Heart right ventricle (tissue), 16 donors: ENCODE measurements at regions of chr12 and their contacts with region 1.

Region 1: DNA sequence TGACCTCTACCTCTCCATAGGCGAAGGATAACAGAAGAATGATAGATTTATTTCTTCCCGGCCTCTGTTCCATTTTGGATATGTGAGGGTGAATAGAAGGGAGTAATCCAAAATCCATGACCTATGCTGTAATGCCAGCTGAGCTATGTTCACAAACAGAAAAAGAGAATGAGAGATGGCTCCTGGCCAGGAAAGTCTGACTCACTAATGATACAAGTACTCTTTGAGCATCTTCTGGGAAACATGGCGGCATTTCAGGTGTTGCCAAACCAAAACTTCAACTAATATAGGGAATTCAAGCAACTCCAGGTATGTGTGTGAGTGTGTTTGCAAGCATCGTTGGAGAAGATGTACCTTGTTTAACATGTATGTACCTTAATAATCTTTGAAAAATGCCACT is 55.1 kb downstream of the MED13L start:
- DNase-seq: peak in 1 of 2 donors; percentile 89
- ATAC-seq: peak; percentile 74 to 92 (median 84)
- H3K4me3 ChIP-seq: no peak overlapping the region
- H3K27ac ChIP-seq: peak overlapping the region in 7 of 10 donors; percentile 23 to 75 (median 39)
- H3K4me1 ChIP-seq: peaks cover 0 to 52% (median 31%) of the 10 kb centered on the region in 9 donors
- H3K27me3 ChIP-seq: no peaks in the 10 kb centered on the region
- CTCF ChIP-seq: no peak

Region 2: GRCh38 chr12:116135209-116135930 is 87.0 kb before region 1 on chr12:
- intact Hi-C with region 1: loop called in 2 of 10 experiments (anchors 5 to 10 kb)
- DNase-seq: peak in 1 of 2 donors; percentile 27
- ATAC-seq: peak in 5 of 8 donors; percentile 15 to 52 (median 23)
- H3K4me3 ChIP-seq: no peak overlapping the region
- H3K27ac ChIP-seq: peak overlapping the region in 2 of 10 donors; percentile 15 to 18
- H3K4me1 ChIP-seq: peaks cover 0 to 91% (median 70%) of the 10 kb centered on the region in 9 donors
- H3K27me3 ChIP-seq: no peaks in the 10 kb centered on the region
- CTCF ChIP-seq: no peak

Region 3: DNA sequence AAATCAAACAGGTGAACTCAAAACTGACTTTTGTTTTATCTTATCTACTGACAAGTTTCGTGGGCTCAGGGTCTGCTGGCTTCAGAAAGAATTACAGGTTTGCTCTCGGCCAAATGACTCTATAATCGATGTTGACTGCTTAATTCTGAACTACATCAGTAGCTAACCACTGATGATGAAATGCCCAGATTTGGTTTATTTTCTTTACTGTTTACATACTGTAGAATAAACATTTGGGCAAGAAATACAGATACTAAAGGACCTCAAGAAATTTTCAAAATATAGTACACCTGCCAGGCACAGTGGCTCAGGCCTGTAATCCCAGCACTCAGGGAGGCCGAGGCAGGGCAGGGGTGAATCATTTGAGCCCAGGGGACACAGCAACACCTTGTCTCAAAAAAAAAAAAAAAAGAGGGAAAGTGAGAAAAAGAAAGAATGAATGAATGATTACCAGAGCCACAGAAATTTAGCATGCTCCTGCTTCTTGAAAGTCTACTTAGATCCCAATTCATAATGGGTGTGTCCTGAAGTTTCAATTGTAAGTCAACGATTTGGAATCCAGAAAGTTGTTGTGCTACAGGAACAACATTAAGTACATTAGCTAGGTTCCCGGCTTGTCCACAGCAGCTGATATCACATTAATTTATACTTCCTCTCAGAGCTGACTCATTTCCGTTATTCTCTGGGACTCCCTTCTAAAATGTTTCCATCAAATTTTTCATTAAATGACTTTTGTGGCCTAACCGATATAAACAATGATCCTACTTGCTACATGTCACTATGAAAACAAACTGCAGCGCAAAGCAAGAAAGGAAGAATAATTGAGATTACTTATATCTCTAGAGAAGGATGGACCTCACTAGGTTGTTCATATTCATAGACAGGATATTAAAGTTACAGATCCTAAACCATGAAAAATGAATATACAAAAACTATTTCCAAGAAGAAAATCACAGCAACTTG is 79.1 kb before region 1 on chr12:
- intact Hi-C with region 1: loop called in 2 of 10 experiments (anchors 5 to 10 kb)
- DNase-seq: no peak
- ATAC-seq: peak in 3 of 8 donors; percentile 21 to 43 (median 40)
- H3K4me3 ChIP-seq: no peak overlapping the region
- H3K27ac ChIP-seq: peak overlapping the region in 8 of 10 donors; percentile 5 to 59 (median 34)
- H3K4me1 ChIP-seq: peaks cover 0 to 89% (median 66%) of the 10 kb centered on the region in 9 donors
- H3K27me3 ChIP-seq: no peaks in the 10 kb centered on the region
- CTCF ChIP-seq: no peak

Region 4: DNA sequence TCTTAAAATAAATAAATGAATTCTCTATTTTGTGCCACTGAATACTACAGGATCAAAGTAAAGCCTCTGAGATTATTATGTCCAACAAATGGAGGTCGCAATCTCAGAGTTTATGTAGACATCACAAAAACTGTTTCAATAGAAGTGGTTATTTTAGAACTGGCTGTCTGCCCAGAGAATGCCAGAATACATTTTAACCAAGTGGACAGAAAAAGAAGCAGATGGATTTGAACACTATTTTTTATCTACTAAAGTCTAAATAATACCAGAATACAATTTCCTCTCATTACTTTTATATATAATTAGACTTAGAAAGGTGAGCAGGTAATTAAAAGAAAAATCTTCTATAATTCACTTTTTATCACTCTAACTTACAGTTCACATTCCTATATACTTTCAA is 63.2 kb before region 1 on chr12:
- intact Hi-C with region 1: loop called in 1 of 10 experiments (anchors 10 kb)
- DNase-seq: peak in 1 of 2 donors; percentile 42
- ATAC-seq: peak in 1 of 8 donors; percentile 42
- H3K4me3 ChIP-seq: no peak overlapping the region
- H3K27ac ChIP-seq: peak overlapping the region in 2 of 10 donors; percentile 3 to 29
- H3K4me1 ChIP-seq: peaks cover 5 to 83% (median 56%) of the 10 kb centered on the region in 9 donors
- H3K27me3 ChIP-seq: no peaks in the 10 kb centered on the region
- CTCF ChIP-seq: no peak

Region 5: GRCh38 chr12:116183741-116184141 is 38.6 kb before region 1 on chr12:
- intact Hi-C with region 1: no loop called
- DNase-seq: no peak
- ATAC-seq: no peak
- H3K4me3 ChIP-seq: no peak overlapping the region
- H3K27ac ChIP-seq: no peak overlapping the region
- H3K4me1 ChIP-seq: peaks cover 0 to 87% (median 64%) of the 10 kb centered on the region in 9 donors
- H3K27me3 ChIP-seq: no peaks in the 10 kb centered on the region
- CTCF ChIP-seq: no peak

Region 6: GRCh38 chr12:116257215-116257614 is 34.9 kb after region 1 on chr12:
- intact Hi-C with region 1: loop called in 1 of 10 experiments (anchors 2 kb)
- DNase-seq: no peak
- ATAC-seq: peak in 7 of 8 donors; percentile 47 to 86 (median 64)
- H3K4me3 ChIP-seq: no peak overlapping the region
- H3K27ac ChIP-seq: peak overlapping the region in 4 of 10 donors; percentile 4 to 48 (median 22)
- H3K4me1 ChIP-seq: peaks cover 0 to 72% (median 44%) of the 10 kb centered on the region in 9 donors
- H3K27me3 ChIP-seq: no peaks in the 10 kb centered on the region
- CTCF ChIP-seq: no peak